Endothelial cell of umbilical vein (primary cell): ENCODE measurements at regions of chr5 and their contacts with region 1.

Region 1: DNA sequence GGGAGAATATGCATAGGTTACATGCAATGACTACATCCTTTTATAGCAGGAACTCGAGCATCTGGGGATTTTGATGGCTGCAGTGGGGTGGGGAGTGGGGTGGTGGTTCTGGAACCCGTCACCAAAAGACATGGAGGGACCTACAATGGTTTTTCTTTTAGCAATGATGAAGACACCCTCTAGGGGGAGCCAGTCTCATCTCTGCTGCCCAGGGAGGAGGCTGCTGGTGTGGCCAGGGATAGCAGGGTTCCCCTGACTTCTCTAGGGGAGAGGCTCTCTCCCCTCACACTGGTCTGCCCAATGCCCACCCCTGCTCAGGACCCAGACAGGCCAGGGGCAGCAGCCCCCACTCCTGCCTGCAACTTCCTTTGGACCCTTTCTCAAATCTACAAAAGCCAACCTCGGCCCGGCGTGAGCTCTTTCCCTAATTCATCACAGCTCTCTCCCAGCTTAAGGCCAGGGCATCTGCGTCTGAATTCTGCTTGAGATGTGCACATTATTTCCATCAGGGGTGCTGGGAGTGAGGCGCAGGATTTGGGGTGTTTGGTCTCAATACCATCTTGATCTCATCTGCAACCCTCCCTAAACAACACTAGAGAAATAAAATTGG is 73.6 kb upstream of the RETREG1 start:
- DNase-seq: peak; percentile 55
- H3K4me3 ChIP-seq: no peak overlapping the region
- H3K27ac ChIP-seq: no peak overlapping the region
- H3K4me1 ChIP-seq: no peaks in the 10 kb centered on the region
- H3K27me3 ChIP-seq: no peaks in the 10 kb centered on the region
- CTCF ChIP-seq: peak; percentile 63 to 82
- POLR2A ChIP-seq: no peak

Region 2: GRCh38 chr5:16701134-16702099 is 11.1 kb after region 1 on chr5:
- CTCF ChIA-PET with region 1: interaction called, 13 read pairs
- POLR2A ChIA-PET with region 1: no interaction called
- dilution Hi-C with region 1: no loop called
- intact Hi-C with region 1: loop called (anchors 1 kb)
- DNase-seq: no peak
- H3K4me3 ChIP-seq: no peak overlapping the region
- H3K27ac ChIP-seq: no peak overlapping the region
- H3K4me1 ChIP-seq: peaks cover 38% of the 10 kb centered on the region
- H3K27me3 ChIP-seq: no peaks in the 10 kb centered on the region
- CTCF ChIP-seq: no peak
- POLR2A ChIP-seq: no peak

Region 3: GRCh38 chr5:16727755-16728325 is 37.5 kb after region 1 on chr5:
- CTCF ChIA-PET with region 1: interaction called, 14 read pairs
- POLR2A ChIA-PET with region 1: no interaction called
- dilution Hi-C with region 1: no loop called
- intact Hi-C with region 1: loop called (anchors 5 kb)
- DNase-seq: peak; percentile 78
- H3K4me3 ChIP-seq: no peak overlapping the region
- H3K27ac ChIP-seq: peak overlapping the region; percentile 64
- H3K4me1 ChIP-seq: peaks cover 37% of the 10 kb centered on the region
- H3K27me3 ChIP-seq: no peaks in the 10 kb centered on the region
- CTCF ChIP-seq: no peak
- POLR2A ChIP-seq: no peak

Region 4: GRCh38 chr5:16736158-16736995 is 46.0 kb after region 1 on chr5:
- CTCF ChIA-PET with region 1: interaction called, 8 read pairs
- POLR2A ChIA-PET with region 1: no interaction called
- dilution Hi-C with region 1: no loop called
- intact Hi-C with region 1: loop called (anchors 2 kb)
- DNase-seq: peak; percentile 86
- H3K4me3 ChIP-seq: no peak overlapping the region
- H3K27ac ChIP-seq: peak overlapping the region; percentile 41
- H3K4me1 ChIP-seq: peaks cover 18% of the 10 kb centered on the region
- H3K27me3 ChIP-seq: no peaks in the 10 kb centered on the region
- CTCF ChIP-seq: no peak
- POLR2A ChIP-seq: no peak

Region 5: GRCh38 chr5:16759147-16759773 is 68.9 kb after region 1 on chr5:
- CTCF ChIA-PET with region 1: interaction called, 14 read pairs
- POLR2A ChIA-PET with region 1: no interaction called
- dilution Hi-C with region 1: no loop called
- intact Hi-C with region 1: no loop called
- DNase-seq: peak; percentile 19
- H3K4me3 ChIP-seq: no peak overlapping the region
- H3K27ac ChIP-seq: no peak overlapping the region
- H3K4me1 ChIP-seq: no peaks in the 10 kb centered on the region
- H3K27me3 ChIP-seq: no peaks in the 10 kb centered on the region
- CTCF ChIP-seq: no peak
- POLR2A ChIP-seq: no peak